GM18951 (cell line): ENCODE measurements at regions of chr6 and their contacts with region 1.

Region 1: GRCh38 chr6:116667623-116668022 is 943 bp downstream of the ZUP1 start:
- POLR2A ChIP-seq: no peak

Region 2: DNA sequence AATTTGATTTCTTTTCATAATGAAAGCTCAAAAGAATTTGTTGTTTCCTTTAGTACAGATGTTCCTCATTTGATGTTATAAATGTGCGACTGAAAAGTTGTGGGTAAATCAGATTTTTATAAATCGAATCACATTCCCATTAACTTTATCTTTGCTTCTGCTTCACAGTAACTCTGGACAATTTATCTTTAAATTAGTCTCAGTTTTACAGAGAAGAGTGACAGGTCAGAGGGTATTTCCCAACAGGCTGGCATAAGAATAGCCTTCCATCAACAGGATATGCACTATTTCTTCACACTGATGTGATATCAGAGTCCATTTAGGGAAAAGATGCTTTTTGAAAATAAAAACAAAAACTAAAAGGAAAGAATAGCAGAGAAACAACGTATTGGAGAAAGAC is 893.9 kb before region 1 on chr6:
- in situ Hi-C with region 1: no loop called
- POLR2A ChIP-seq: no peak

Region 3: DNA sequence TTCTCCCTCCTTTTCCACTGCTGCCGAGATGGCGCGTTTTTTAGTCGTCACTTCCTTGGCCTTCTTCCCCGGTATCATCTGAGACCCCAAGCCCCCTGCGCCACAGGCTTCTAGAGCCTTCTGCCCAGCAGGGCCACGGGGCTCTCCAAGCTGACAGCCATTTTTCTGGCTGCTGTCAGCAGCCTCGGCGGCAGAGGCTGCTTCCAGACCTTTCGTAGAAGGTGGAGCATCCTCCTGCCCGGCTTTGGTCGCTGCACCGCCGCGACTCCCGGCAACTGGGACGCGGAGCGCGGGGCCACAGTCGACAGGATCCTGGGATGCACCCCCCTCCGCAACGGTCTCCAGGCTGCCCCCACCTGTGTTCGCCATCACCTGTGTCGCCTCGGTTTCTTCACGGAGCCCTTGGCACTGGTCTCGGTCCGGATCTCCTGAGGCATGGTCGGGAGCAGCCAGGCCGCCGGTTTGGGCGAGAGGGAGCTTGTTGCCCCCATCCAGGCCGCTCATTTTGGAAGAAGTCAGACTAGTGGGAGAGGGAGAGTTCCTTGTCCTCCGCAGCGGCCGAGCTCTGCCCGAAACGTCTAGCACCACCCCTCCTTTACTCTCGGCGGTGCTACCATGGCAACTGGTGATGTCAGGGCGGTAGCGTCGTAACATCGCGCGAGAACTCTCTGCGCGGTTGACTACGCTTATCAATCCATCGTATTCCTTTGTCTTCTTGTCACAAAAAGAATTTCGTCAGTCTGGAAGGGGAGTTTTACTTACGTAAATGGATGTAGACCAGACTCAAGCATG is 413.9 kb before region 1 on chr6 and contains the start of gene TSPYL4:
- in situ Hi-C with region 1: loop called (anchors 25 kb)
- POLR2A ChIP-seq: peak; percentile 65

Region 4: DNA sequence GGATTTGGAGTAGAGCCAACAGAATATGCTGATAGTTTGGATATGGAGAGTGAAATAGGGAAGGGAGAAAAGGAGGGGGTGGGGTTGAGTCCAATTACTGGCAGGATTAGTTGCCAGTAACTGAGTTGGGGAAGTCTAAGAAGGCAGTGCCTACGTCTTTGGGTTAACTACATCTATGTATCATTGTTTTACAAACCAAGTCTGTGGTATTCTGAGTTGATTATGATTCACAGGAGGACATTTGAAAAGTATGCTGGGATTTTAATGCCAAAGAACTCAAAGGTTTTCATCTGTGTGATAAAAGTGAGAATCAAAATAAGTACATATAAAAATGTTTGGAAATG is 282.2 kb before region 1 on chr6:
- in situ Hi-C with region 1: no loop called
- POLR2A ChIP-seq: no peak

Region 5: GRCh38 chr6:116888732-116889360 is 221.2 kb after region 1 on chr6:
- in situ Hi-C with region 1: no loop called
- POLR2A ChIP-seq: no peak